Activated CD4-positive, alpha-beta memory T cell treated with anti-CD3 and anti-CD28 coated beads for 36 hours (primary cell): ENCODE measurements at regions of chr15 and their contacts with region 1.

Region 1: GRCh38 chr15:82999905-83000671 is 11.4 kb downstream of the C15orf40 start:
- DNase-seq: peak; percentile 19
- H3K4me3 Mint-ChIP-seq: peak overlapping the region; percentile 36
- H3K27ac Mint-ChIP-seq: no peak overlapping the region
- H3K4me1 Mint-ChIP-seq: peaks cover 7% of the 10 kb centered on the region
- H3K27me3 Mint-ChIP-seq: no peaks in the 10 kb centered on the region

Region 2: DNA sequence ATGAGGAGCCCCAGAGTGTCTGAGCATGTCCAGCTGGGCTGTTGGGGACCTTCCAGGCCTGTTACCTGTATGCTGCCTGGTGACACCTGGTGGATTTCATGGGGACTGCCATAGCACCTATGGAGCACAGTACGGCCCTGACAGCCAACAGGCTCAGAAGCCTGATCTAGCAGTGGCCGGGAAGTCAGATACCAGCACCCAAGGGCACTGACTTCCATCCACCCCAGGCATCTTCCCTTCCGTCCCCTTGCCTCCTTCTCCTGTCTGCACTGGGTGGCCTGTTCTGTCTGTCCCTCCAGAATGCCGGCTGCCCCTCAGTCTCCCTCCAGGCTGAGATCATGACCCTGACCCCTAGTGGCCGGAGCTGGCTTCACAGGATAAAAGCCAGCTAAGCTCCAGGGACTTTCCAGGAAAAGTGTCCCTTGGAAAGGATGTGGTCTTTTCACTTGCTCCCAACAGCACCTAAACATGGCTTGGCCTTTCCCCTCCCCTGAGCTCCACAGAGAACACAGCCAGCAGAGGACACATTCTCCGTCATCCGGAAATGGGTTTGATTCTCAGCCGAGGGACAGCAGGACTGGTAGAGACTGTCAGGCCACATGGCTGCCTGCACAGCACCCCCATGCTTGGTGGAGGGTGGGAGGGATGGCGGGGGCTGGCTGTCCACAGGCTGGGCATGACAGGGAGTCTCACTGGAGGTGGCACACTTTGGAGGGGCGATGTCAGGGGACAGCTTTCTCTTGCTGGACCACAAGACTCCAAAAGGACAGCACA is 469.3 kb before region 1 on chr15:
- CTCF ChIA-PET with region 1: interaction called, 13 read pairs
- POLR2A ChIA-PET with region 1: no interaction called
- intact Hi-C with region 1: loop called (anchors 1 kb)
- DNase-seq: peak; percentile 78
- H3K4me3 Mint-ChIP-seq: peak overlapping the region; percentile 31
- H3K27ac Mint-ChIP-seq: peak overlapping the region; percentile 76
- H3K4me1 Mint-ChIP-seq: peaks cover 15% of the 10 kb centered on the region
- H3K27me3 Mint-ChIP-seq: no peaks in the 10 kb centered on the region

Region 3: DNA sequence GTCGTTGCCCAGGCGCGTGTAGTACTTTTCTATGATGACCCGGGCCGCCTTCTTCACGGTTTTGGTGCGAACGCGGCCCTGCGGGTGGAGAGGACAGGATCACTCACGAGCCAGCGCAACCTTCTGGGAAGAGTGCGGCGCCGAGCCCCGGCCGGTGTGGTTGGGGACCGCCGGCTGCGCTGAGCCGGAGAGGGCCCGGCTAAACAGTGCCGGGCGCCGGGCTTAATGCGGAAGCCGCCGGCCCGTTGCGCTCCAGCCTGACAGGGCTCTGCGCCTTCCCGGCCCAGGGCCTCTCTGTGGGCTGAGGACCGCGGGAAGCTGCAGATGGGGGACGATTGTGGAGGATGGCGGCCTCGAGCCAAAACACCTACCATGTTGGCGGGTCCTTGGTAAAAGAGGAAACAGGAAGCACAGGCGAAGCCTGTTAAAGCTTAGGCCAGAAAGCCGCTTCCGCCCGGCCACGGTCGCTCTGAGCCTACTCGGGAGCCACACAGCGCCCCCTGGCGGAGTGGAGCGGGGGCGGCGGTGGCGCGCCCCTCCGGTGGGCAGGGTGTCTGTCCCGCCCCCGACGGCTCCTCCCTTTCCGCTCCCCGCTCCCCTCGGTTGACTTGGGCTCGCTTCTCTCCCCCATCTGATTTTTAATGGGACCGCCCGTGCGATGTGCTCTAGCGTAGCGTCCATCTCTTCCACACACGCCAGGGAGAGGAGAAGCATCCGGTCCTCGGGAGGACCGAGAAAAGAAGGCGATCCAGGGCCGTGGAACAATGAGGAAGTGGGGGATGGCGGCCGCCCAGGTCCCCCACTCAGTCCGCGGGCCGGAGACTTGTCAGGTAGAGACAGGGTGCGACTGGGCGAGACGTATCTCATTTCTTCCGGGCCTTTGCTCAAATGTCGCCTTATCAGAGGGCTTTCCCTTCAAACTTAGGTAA is 459.8 kb before region 1 on chr15 and contains the start of gene RPS17:
- CTCF ChIA-PET with region 1: interaction called, 7 read pairs
- POLR2A ChIA-PET with region 1: no interaction called
- intact Hi-C with region 1: loop called (anchors 2 kb)
- DNase-seq: peak; percentile 98
- H3K4me3 Mint-ChIP-seq: peak within 1 kb of the TSS; percentile 98
- H3K27ac Mint-ChIP-seq: peak within 1 kb of the TSS; percentile 88
- H3K4me1 Mint-ChIP-seq: peaks cover 27% of the 10 kb centered on the region
- H3K27me3 Mint-ChIP-seq: peaks cover 2% of the 10 kb centered on the region
- total RNA-seq, gene RPS17: 2,581 to 2,594 TPM

Region 4: GRCh38 chr15:82849556-82850512 is 150.3 kb before region 1 on chr15:
- CTCF ChIA-PET with region 1: interaction called, 42 read pairs
- POLR2A ChIA-PET with region 1: no interaction called
- intact Hi-C with region 1: loop called (anchors 1 kb)
- DNase-seq: peak; percentile 64
- H3K4me3 Mint-ChIP-seq: no peak overlapping the region
- H3K27ac Mint-ChIP-seq: no peak overlapping the region
- H3K4me1 Mint-ChIP-seq: peaks cover 7% of the 10 kb centered on the region
- H3K27me3 Mint-ChIP-seq: no peaks in the 10 kb centered on the region